Ascending aorta (tissue), 2 donors: ENCODE measurements at regions of chr7 and their contacts with region 1.

Region 1: DNA sequence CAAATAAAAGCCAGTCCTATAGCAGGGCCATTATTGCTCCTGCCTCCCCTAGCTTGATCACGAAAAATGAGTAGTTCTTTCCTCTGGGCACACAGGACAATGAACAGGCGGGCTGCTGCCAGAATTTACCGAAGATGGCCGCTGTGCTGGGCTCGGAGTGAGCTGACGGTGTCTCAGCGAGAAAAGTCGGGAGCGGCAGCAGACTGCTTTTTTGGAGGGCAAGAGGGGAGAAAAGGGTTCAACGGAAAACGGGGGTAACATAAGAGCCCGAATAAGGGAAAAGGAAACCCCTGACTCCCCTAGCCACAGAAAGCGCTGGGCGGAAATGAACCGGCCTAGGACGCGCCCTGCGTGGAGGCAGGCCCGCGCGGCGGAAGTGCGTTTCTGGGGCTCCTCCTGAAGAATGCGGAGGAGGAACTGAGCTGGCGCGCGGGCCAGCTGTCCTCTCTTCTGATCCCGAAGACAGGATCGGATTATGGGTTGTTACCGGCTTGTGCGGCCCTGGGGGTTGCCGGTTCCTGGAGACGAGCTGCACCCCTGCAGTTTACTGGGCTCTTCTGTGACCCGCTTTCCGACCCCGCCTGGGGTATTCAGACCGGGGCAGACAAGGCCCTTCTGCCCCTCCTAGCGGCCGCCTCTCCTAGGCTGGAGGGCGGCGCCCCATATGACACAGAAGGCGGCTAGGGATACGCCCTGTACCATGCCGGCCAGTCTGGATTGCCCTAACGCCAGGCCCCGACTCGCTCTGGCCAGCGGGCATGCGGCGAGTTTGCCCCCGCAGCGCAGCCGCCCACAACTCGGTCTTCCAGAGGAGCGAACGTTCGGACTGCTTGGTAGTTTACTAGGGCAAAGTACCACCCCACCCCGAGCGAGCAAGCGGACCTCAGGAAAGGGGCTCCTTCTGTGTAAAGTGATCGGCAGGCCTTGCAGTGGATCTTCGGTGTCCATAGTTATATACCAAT is 30.1 kb upstream of the KMT2E start:
- DNase-seq: peak; percentile 57 to 95
- H3K4me3 ChIP-seq: peak overlapping the region; percentile 65 to 69
- H3K27ac ChIP-seq: peak overlapping the region; percentile 91 to 98
- H3K4me1 ChIP-seq: peaks cover 6 to 43% of the 10 kb centered on the region in 2 donors
- H3K27me3 ChIP-seq: no peaks in the 10 kb centered on the region
- CTCF ChIP-seq: peak; percentile 57 to 64 (median 62)

Region 2: DNA sequence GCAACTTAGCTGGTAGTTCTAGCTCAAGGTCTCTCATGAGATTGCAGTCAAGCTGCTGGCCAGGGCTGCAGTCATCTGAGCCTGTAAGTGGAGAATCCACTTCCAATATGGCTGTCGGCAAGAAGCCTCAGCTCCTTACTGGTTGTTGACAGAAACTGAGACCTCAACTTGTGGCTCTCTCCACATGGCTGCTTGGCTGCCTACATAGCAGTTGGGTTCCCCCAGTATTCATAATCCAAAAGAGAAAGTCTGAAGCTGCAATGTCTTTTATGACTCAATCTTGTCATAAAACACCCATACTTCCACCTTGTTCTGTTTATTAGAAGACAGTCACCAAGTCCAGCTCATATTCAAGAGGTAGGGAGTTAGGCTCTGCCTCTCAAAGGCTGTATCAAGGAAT is 304.8 kb before region 1 on chr7:
- intact Hi-C with region 1: no loop called
- DNase-seq: no peak
- H3K4me3 ChIP-seq: no peak overlapping the region
- H3K27ac ChIP-seq: no peak overlapping the region
- H3K4me1 ChIP-seq: no peaks in the 10 kb centered on the region
- H3K27me3 ChIP-seq: no peaks in the 10 kb centered on the region
- CTCF ChIP-seq: no peak

Region 3: DNA sequence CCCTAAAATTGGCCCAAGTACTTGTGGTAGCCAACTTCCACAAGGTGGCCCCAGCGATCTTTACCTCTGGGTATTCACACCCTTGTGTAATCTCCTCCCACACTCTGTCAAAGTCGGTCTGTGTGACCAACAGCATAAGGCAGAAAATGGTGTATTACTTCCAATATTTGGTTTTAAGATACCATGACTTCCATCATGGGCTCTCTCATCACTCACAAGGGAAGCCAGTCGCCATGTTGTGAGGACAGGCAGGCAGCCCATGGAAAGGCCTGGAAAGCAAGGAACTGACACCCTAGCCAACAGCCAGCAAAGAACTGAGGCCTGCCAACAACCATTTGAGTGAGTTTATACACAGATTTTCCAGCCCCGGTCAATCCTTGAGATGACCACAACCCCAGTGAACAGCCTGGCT is 60.8 kb before region 1 on chr7:
- intact Hi-C with region 1: loop called (anchors 5 kb)
- DNase-seq: peak in 1 of 2 donors; percentile 89
- H3K4me3 ChIP-seq: no peak overlapping the region
- H3K27ac ChIP-seq: peak overlapping the region; percentile 62 to 70
- H3K4me1 ChIP-seq: peaks cover 0 to 9% of the 10 kb centered on the region in 2 donors
- H3K27me3 ChIP-seq: no peaks in the 10 kb centered on the region
- CTCF ChIP-seq: peak; percentile 54 to 75 (median 68)

Region 4: GRCh38 chr7:104933521-104933988 is 50.3 kb before region 1 on chr7:
- intact Hi-C with region 1: no loop called
- DNase-seq: no peak
- H3K4me3 ChIP-seq: no peak overlapping the region
- H3K27ac ChIP-seq: no peak overlapping the region
- H3K4me1 ChIP-seq: no peaks in the 10 kb centered on the region
- H3K27me3 ChIP-seq: no peaks in the 10 kb centered on the region
- CTCF ChIP-seq: no peak

Region 5: GRCh38 chr7:105012503-105013220 is 28.8 kb after region 1 on chr7:
- intact Hi-C with region 1: loop called (anchors 1 kb)
- DNase-seq: peak; percentile 98 to 100
- H3K4me3 ChIP-seq: peak overlapping the region; percentile 83 to 98
- H3K27ac ChIP-seq: peak overlapping the region; percentile 97 to 100
- H3K4me1 ChIP-seq: peaks cover 0 to 12% of the 10 kb centered on the region in 2 donors
- H3K27me3 ChIP-seq: no peaks in the 10 kb centered on the region
- CTCF ChIP-seq: no peak

Region 6: GRCh38 chr7:105106473-105106872 is 122.6 kb after region 1 on chr7:
- intact Hi-C with region 1: loop called (anchors 5 kb)
- DNase-seq: no peak
- H3K4me3 ChIP-seq: no peak overlapping the region
- H3K27ac ChIP-seq: peak overlapping the region in 1 of 2 donors; percentile 12
- H3K4me1 ChIP-seq: peaks cover 0 to 16% of the 10 kb centered on the region in 2 donors
- H3K27me3 ChIP-seq: no peaks in the 10 kb centered on the region
- CTCF ChIP-seq: no peak

Region 7: DNA sequence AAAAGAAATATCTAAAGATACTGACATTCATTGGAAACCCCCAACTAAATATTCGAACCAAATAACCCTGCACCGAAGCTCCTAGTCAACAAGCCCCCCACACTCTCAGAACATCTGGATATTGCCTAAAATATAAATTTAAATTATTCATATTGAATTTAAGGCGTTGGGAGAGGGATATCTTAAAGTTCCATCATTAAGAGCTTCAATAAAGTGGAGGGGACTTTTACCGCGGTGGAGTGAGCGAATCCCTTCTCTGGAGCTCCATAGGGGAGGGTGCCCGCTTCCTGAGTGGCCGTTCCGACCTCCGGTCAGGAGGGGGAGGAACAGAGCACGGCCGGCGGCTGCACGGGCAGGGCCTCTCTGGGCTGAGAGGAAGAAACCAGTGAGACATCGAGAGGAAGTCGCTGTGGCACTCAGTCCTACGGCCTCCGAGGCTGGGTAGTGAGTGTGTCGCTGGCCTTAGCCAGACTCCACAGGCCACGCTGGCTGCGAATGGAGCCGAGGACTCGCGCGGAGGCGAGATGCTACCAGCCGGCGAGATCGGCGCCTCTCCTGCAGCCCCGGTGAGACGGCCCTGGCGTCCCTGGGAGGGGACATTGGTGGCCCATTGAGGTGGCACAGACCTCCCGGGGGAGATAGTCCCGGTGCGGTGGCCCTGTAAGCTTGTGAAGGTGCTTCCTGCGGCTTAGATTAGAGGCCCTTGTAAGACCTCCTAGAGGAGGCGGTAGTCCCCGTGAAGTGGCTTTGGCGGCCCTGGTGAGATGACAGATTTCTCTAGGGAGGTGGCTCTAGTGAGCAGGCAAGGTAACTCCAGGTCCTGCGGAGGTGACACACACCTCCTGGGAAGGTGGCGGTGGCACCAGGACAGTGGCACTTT is 548.2 kb after region 1 on chr7 and contains the start of gene RINT1:
- intact Hi-C with region 1: loop called (anchors 5 kb)
- DNase-seq: peak; percentile 66 to 95
- H3K4me3 ChIP-seq: peak within 1 kb of the TSS; percentile 70
- H3K27ac ChIP-seq: peak within 1 kb of the TSS; percentile 71 to 80
- H3K4me1 ChIP-seq: peaks cover 0 to 12% of the 10 kb centered on the region in 2 donors
- H3K27me3 ChIP-seq: no peaks in the 10 kb centered on the region
- CTCF ChIP-seq: peak; percentile 26 to 80 (median 75)
- total RNA-seq, gene RINT1: 8.9 TPM